B cell (primary cell): ENCODE measurements at regions of chr3 and their contacts with region 1.

Region 1: DNA sequence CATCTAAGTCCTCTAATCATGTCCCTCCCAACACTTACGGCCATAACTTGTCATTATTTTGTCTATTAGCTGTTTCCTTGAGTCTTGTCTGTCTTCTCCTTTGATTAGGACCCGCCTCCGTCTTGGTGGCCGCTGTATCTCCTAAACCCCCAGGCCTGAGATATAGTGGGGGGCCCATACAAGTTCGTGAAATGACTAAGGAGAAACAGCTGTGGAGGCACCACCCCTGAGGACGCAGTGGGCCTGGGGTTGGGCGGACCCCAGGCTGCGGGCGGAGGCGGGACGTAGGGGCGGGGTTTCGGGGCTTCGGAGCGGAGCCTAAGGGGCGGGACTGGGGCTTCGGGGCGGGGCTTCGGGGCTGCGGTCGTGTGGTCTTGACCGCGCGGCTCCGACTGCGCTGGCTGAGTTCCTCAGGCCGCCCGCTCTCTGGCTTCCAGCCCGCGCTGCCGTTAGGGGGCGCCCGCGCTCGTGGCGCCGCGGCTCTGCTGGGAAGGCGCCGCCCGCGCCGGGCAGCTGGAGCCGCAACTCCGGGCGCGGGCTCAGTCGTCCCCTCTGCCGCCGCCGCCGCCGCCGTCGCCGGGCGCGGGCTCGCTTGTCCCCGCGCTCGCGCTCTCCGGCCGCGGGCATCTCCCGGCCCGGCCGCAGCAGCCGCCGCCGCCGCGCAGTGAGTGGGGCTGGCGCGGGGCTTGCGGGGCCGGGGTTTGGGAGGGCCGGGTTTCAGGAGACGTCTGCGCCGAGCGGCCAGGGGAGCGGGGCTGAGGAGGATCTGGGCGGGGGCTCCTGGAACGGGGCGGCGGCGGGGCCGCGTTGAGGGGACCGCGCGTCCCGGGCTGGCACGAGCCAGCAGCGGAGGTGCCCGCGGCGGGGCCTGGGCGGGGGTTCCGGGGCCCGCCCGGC is at the start of gene KCTD6:
- DNase-seq: peak; percentile 96
- ATAC-seq: peak; percentile 91
- H3K4me3 ChIP-seq: peak within 1 kb of the TSS; percentile 50 to 82 (median 75)
- H3K4me3 Mint-ChIP-seq: peak within 1 kb of the TSS; percentile 93
- H3K27ac ChIP-seq: peak within 1 kb of the TSS; percentile 42 to 50
- H3K27ac Mint-ChIP-seq: peak within 1 kb of the TSS; percentile 87
- H3K4me1 ChIP-seq: peaks cover 21 to 29% of the 10 kb centered on the region in 2 donors
- H3K4me1 Mint-ChIP-seq: peaks cover 46% of the 10 kb centered on the region
- H3K27me3 ChIP-seq: no peaks in the 10 kb centered on the region
- H3K27me3 Mint-ChIP-seq: peaks cover 5% of the 10 kb centered on the region
- CTCF ChIP-seq: peak; percentile 59
- total RNA-seq, gene KCTD6: 14.6 and 16.8 TPM in 2 replicates

Region 2: DNA sequence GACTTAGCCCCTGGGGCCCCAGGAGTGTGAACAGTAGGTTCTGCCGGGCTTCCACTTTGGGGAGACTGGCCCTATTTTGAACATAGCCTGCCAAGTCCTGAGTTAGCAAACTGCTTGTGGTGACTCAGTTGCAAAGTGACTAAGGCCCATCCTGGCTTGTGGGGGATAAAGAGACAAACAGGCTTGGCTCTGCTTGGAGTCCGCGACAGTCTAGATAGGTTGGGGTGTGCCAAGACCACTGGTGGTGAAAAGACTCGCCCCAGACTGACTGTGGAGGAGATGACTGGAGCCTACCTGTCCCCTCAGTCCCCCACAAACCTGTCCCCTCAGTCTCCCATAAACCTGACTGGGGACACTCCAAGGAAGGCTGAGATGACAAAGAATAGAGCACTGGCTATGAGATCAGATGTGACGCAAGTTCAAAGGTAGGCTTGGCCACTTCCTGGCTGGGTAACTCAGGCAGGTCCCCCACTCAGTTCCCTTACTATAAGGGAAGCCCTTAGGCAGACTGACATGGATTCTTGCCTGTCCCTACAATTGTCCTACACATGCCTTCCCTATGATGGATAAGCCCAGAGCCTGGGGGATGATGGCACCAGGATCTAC is 285.2 kb before region 1 on chr3:
- CTCF ChIA-PET with region 1: no interaction called
- POLR2A ChIA-PET with region 1: interaction called, 10 read pairs
- intact Hi-C with region 1: no loop called
- DNase-seq: no peak
- ATAC-seq: no peak
- H3K4me3 ChIP-seq: no peak overlapping the region
- H3K4me3 Mint-ChIP-seq: no peak overlapping the region
- H3K27ac ChIP-seq: no peak overlapping the region
- H3K27ac Mint-ChIP-seq: no peak overlapping the region
- H3K4me1 ChIP-seq: peaks cover 23 to 27% of the 10 kb centered on the region in 2 donors
- H3K4me1 Mint-ChIP-seq: peaks cover 30% of the 10 kb centered on the region
- H3K27me3 ChIP-seq: no peaks in the 10 kb centered on the region
- H3K27me3 Mint-ChIP-seq: no peaks in the 10 kb centered on the region
- CTCF ChIP-seq: no peak

Region 3: GRCh38 chr3:58324391-58325390 is 167.1 kb before region 1 on chr3:
- CTCF ChIA-PET with region 1: interaction called, 6 read pairs
- POLR2A ChIA-PET with region 1: no interaction called
- intact Hi-C with region 1: loop called (anchors 1 kb)
- DNase-seq: no peak
- ATAC-seq: peak; percentile 39
- H3K4me3 ChIP-seq: no peak overlapping the region
- H3K4me3 Mint-ChIP-seq: peak overlapping the region; percentile 57
- H3K27ac ChIP-seq: peak overlapping the region in 1 of 2 donors; percentile 62
- H3K27ac Mint-ChIP-seq: peak overlapping the region; percentile 74
- H3K4me1 ChIP-seq: peaks cover 21 to 29% of the 10 kb centered on the region in 2 donors
- H3K4me1 Mint-ChIP-seq: peaks cover 38% of the 10 kb centered on the region
- H3K27me3 ChIP-seq: no peaks in the 10 kb centered on the region
- H3K27me3 Mint-ChIP-seq: no peaks in the 10 kb centered on the region
- CTCF ChIP-seq: no peak

Region 4: GRCh38 chr3:58414538-58415197 is 77.1 kb before region 1 on chr3:
- CTCF ChIA-PET with region 1: interaction called, 25 read pairs
- POLR2A ChIA-PET with region 1: interaction called, 3 read pairs
- intact Hi-C with region 1: loop called (anchors 1 kb)
- DNase-seq: peak; percentile 80
- ATAC-seq: peak; percentile 77
- H3K4me3 ChIP-seq: no peak overlapping the region
- H3K4me3 Mint-ChIP-seq: no peak overlapping the region
- H3K27ac ChIP-seq: peak overlapping the region; percentile 27 to 46
- H3K27ac Mint-ChIP-seq: peak overlapping the region; percentile 68
- H3K4me1 ChIP-seq: peaks cover 14 to 18% of the 10 kb centered on the region in 2 donors
- H3K4me1 Mint-ChIP-seq: peaks cover 46% of the 10 kb centered on the region
- H3K27me3 ChIP-seq: no peaks in the 10 kb centered on the region
- H3K27me3 Mint-ChIP-seq: no peaks in the 10 kb centered on the region
- CTCF ChIP-seq: peak; percentile 77

Region 5: DNA sequence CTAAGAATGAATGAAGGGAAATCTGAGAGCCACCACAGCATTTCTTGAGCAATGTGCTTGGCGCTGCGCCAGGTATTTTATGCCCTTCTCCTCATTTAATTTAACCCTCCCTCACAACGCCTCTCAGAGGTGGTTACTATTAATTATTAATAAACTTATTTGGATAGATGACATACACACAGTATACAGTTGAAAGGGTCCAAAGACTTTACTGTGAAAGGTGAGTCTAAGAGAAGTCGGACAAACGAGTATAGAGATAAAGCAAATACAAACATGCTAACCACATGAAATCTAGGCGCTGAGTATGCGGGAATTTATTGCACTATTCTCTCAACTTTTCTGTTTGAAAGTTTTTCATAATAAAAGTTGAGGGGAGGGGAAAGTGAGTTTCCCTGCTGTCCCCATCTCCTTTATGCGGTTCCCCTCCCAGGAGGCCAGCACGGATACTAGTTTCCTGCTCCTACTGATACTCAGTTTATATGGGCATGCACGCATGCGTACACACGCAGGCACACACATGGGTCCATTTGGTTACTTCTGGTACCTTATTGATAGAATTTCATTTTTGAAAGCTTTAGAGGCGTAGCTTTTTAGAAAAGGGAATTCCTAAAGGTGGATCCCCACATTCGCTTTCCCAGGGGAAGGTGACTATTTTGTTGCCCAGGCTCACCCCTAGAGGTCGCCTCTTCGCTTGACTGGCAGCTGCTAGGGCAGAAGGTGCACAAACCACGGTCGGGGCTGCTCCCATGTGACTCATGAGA is 28.4 kb before region 1 on chr3:
- CTCF ChIA-PET with region 1: interaction called, 8 read pairs
- POLR2A ChIA-PET with region 1: no interaction called
- intact Hi-C with region 1: loop called (anchors 1 kb)
- DNase-seq: peak; percentile 67
- ATAC-seq: peak; percentile 90
- H3K4me3 ChIP-seq: peak overlapping the region in 2 of 5 experiments; percentile 3 to 35
- H3K4me3 Mint-ChIP-seq: peak overlapping the region; percentile 54
- H3K27ac ChIP-seq: no peak overlapping the region
- H3K27ac Mint-ChIP-seq: no peak overlapping the region
- H3K4me1 ChIP-seq: peaks cover 7 to 9% of the 10 kb centered on the region in 2 donors
- H3K4me1 Mint-ChIP-seq: peaks cover 7% of the 10 kb centered on the region
- H3K27me3 ChIP-seq: no peaks in the 10 kb centered on the region
- H3K27me3 Mint-ChIP-seq: no peaks in the 10 kb centered on the region
- CTCF ChIP-seq: peak; percentile 76

Region 6: GRCh38 chr3:58532794-58533220 is 41.1 kb after region 1 on chr3:
- CTCF ChIA-PET with region 1: interaction called, 12 read pairs
- POLR2A ChIA-PET with region 1: no interaction called
- intact Hi-C with region 1: loop called (anchors 1 kb)
- DNase-seq: peak; percentile 89
- ATAC-seq: peak; percentile 99
- H3K4me3 ChIP-seq: no peak overlapping the region
- H3K4me3 Mint-ChIP-seq: no peak overlapping the region
- H3K27ac ChIP-seq: no peak overlapping the region
- H3K27ac Mint-ChIP-seq: peak overlapping the region; percentile 7
- H3K4me1 ChIP-seq: peaks cover 6 to 8% of the 10 kb centered on the region in 2 donors
- H3K4me1 Mint-ChIP-seq: peaks cover 6% of the 10 kb centered on the region
- H3K27me3 ChIP-seq: no peaks in the 10 kb centered on the region
- H3K27me3 Mint-ChIP-seq: no peaks in the 10 kb centered on the region
- CTCF ChIP-seq: peak; percentile 91